ENCODE measurements at regions of chr12 and their contacts with region 1.

Region 1: DNA sequence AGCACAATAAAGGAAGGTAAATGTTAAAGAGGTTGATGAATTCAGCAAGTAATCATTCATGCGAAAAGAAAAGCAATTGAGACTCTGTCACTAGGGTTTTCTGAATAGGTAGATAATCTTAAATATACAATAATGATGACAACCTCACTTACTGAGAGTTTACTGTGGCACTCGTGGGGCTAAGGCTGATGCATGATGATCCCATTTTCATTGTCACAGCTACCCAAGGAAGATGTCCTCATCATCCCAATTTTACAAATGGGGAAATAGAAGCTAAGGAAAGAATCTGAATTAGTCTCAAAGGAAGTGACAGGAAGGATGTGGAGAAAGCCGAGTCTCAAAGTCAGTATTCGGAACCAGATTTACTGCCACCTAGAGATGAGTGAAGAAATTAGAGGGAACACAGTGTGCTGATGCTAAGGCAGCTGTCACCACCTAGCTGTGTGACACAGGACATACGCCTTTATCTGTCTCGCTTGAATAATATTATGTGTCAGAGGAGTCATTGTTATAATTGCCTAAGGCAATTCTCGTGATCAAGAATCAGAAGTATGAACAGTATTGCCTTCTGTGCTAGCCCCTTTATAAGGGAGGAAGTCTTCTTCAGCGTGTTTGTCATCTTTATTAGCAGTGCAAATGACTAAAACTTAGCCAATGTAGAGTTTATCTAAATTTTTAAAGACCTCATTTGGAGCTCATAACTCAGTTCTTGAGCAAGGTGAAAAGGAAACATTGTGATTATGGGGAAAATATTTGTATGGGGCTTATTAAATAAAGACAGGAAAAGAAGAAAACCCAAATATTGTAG is 63.2 kb downstream of the ERGIC2 start:
- DNase-seq: peak; percentile 96
- ATAC-seq: peak; percentile 85
- H3K4me3 ChIP-seq: no peak overlapping the region
- H3K27ac ChIP-seq: no peak overlapping the region
- H3K4me1 ChIP-seq: peaks cover 38% of the 10 kb centered on the region
- H3K27me3 ChIP-seq: no peaks in the 10 kb centered on the region
- CTCF ChIP-seq: peak; percentile 100

Region 2: DNA sequence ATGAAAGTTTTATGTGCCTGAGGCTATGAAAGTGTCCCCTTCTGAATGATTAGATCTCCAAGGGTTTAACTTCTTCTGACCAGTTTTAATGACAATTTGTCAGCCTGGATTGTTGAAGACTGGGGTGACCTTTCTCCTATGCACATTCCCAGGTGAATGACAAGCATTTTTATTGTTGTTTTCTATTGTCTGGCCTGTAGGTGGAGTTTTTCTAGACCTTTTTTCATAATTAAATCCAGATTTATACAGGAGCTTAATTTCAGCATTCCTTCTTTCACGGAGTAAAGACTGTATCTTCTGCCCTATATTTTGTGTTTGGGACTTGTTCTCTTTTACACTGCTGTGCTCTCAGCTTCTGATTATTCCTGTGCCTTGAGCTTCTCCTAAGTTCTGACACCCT is 293.6 kb before region 1 on chr12:
- CTCF ChIA-PET with region 1: interaction called, 3 read pairs
- POLR2A ChIA-PET with region 1: no interaction called
- intact Hi-C with region 1: loop called (anchors 5 kb)
- DNase-seq: peak; percentile 61
- ATAC-seq: peak; percentile 61
- H3K4me3 ChIP-seq: no peak overlapping the region
- H3K27ac ChIP-seq: no peak overlapping the region
- H3K4me1 ChIP-seq: peaks cover 5% of the 10 kb centered on the region; the same call in 1 of the 2 replicates
- H3K27me3 ChIP-seq: no peaks in the 10 kb centered on the region
- CTCF ChIP-seq: peak; percentile 96

Region 3: GRCh38 chr12:29088611-29089219 is 229.0 kb before region 1 on chr12:
- CTCF ChIA-PET with region 1: interaction called, 12 read pairs
- POLR2A ChIA-PET with region 1: no interaction called
- intact Hi-C with region 1: loop called (anchors 1 kb)
- DNase-seq: peak; percentile 73
- ATAC-seq: peak; percentile 71
- H3K4me3 ChIP-seq: no peak overlapping the region
- H3K27ac ChIP-seq: no peak overlapping the region
- H3K4me1 ChIP-seq: no peaks in the 10 kb centered on the region
- H3K27me3 ChIP-seq: no peaks in the 10 kb centered on the region
- CTCF ChIP-seq: peak; percentile 98

Region 4: GRCh38 chr12:29164477-29165393 is 153.0 kb before region 1 on chr12:
- CTCF ChIA-PET with region 1: no interaction called
- POLR2A ChIA-PET with region 1: no interaction called
- intact Hi-C with region 1: loop called (anchors 5 kb)
- DNase-seq: peak; percentile 91
- ATAC-seq: peak; percentile 97
- H3K4me3 ChIP-seq: no peak overlapping the region; the same call in 1 of the 2 replicates
- H3K27ac ChIP-seq: peak overlapping the region; percentile 57
- H3K4me1 ChIP-seq: peaks cover 30% of the 10 kb centered on the region
- H3K27me3 ChIP-seq: no peaks in the 10 kb centered on the region
- CTCF ChIP-seq: no peak

Region 5: GRCh38 chr12:29350080-29350479 is 32.3 kb after region 1 on chr12:
- CTCF ChIA-PET with region 1: no interaction called
- POLR2A ChIA-PET with region 1: no interaction called
- intact Hi-C with region 1: loop called (anchors 2 kb)
- DNase-seq: peak; percentile 94
- ATAC-seq: peak; percentile 88
- H3K4me3 ChIP-seq: no peak overlapping the region
- H3K27ac ChIP-seq: no peak overlapping the region
- H3K4me1 ChIP-seq: peaks cover 11% of the 10 kb centered on the region
- H3K27me3 ChIP-seq: no peaks in the 10 kb centered on the region
- CTCF ChIP-seq: no peak

Region 6: DNA sequence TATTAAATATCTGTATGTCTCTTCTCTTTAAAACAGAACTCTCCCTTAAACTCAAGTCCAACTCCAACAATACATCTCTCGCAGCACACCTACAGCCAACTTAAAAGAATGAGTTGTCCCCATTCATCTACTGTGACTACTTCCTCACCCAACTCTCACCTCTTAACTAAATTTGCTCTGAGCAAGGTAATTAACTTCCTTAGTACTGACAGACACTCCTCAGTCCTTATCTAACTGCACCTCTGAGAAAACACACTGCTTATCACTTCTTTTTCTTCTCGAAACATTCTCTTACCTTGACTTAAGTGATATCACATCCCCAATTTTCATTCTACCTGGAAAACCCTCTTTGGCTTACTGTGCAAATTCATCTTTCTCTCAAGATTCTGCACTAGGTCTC is 56.3 kb after region 1 on chr12:
- CTCF ChIA-PET with region 1: no interaction called
- POLR2A ChIA-PET with region 1: no interaction called
- intact Hi-C with region 1: no loop called
- DNase-seq: no peak
- ATAC-seq: no peak
- H3K4me3 ChIP-seq: no peak overlapping the region
- H3K27ac ChIP-seq: no peak overlapping the region
- H3K4me1 ChIP-seq: peaks cover 6% of the 10 kb centered on the region
- H3K27me3 ChIP-seq: no peaks in the 10 kb centered on the region
- CTCF ChIP-seq: no peak

Region 7: DNA sequence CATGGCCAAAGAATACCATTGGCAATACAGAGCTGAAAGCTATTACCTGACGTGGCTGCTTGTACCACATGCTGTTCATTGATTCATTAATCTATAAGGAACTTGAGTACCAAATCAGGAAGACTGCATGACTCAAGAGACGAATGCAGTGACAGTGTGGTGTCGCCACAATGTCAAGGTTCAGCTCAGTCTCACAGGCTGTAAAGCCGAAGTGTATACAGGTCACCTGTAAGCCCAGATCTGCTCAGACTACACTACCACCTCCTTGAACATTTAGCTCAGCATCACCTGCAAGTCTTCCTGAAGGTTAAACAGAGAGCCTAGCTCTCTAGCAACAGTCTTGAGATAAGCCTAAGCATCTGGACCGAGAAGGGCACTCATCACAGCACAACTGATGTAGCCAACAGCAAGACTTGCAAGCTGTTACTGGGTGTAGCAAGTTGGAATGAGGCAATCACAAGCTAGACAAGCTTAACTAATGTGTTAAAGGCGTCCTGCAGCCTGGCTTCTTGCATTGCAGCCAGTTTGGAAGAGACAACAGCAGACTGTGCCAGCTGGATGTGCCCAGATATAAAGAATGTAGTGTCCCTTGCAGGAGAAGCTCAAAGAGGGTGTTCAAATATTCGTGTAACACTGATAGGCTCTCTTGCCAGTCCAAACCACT is 445.0 kb after region 1 on chr12:
- CTCF ChIA-PET with region 1: no interaction called
- POLR2A ChIA-PET with region 1: no interaction called
- intact Hi-C with region 1: no loop called
- DNase-seq: no peak
- ATAC-seq: no peak
- H3K4me3 ChIP-seq: no peak overlapping the region
- H3K27ac ChIP-seq: no peak overlapping the region
- H3K4me1 ChIP-seq: no peaks in the 10 kb centered on the region
- H3K27me3 ChIP-seq: no peaks in the 10 kb centered on the region
- CTCF ChIP-seq: no peak